Esophagus muscularis mucosa (tissue), 4 donors: ENCODE measurements at regions of chr2 and their contacts with region 1.

Region 1: GRCh38 chr2:117835990-117836760 is 21.7 kb downstream of the DDX18 start:
- DNase-seq: peak; percentile 95
- H3K4me3 ChIP-seq: peak overlapping the region; percentile 55 to 60 (median 57)
- H3K27ac ChIP-seq: peak overlapping the region; percentile 64 to 76 (median 68)
- H3K4me1 ChIP-seq: peaks cover 10 to 19% (median 14%) of the 10 kb centered on the region in 4 donors
- H3K27me3 ChIP-seq: no peaks in the 10 kb centered on the region
- CTCF ChIP-seq: peak; percentile 68 to 89 (median 74)
- EP300 ChIP-seq: no peak
- POLR2A ChIP-seq: no peak

Region 2: GRCh38 chr2:117936871-117937428 is 100.8 kb after region 1 on chr2:
- intact Hi-C with region 1: loop called (anchors 10 kb)
- DNase-seq: no peak
- H3K4me3 ChIP-seq: no peak overlapping the region
- H3K27ac ChIP-seq: no peak overlapping the region
- H3K4me1 ChIP-seq: peaks cover 0 to 12% (median 0%) of the 10 kb centered on the region in 4 donors
- H3K27me3 ChIP-seq: no peaks in the 10 kb centered on the region
- CTCF ChIP-seq: no peak
- EP300 ChIP-seq: no peak
- POLR2A ChIP-seq: no peak

Region 3: DNA sequence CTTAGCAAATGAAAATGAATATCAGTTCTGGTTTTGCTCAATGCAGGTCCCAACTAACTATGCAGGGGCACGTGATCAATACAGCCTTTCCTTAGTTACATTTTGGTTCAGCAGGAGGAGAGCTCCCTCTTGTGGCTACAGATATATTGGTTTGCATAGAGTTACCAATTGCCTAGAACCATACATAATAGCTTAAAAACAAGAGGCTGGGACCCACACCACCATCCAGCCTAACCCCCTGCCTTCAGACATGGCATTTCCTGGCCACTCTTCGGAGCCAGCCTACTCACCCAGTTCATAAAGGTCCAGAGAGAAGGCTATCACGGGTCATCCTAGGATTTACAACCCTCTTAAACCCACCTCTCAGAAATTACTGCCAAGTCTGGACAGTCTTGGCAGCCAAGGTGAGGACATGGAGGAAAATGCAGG is 167.2 kb after region 1 on chr2:
- intact Hi-C with region 1: loop called (anchors 10 kb)
- DNase-seq: no peak
- H3K4me3 ChIP-seq: no peak overlapping the region
- H3K27ac ChIP-seq: no peak overlapping the region
- H3K4me1 ChIP-seq: peaks cover 3 to 15% (median 10%) of the 10 kb centered on the region in 4 donors
- H3K27me3 ChIP-seq: no peaks in the 10 kb centered on the region
- CTCF ChIP-seq: peak; percentile 71 to 82 (median 72)
- EP300 ChIP-seq: no peak
- POLR2A ChIP-seq: no peak